GM13976 (cell line): ENCODE measurements at regions of chr3 and their contacts with region 1.

Region 1: GRCh38 chr3:171654809-171655208 is 155.5 kb downstream of the PLD1 start:
- DNase-seq: no peak
- CTCF ChIP-seq: no peak

Region 2: GRCh38 chr3:171768281-171768900 is 113.6 kb after region 1 on chr3:
- in situ Hi-C with region 1: loop called (anchors 10 kb)
- DNase-seq: no peak
- CTCF ChIP-seq: no peak

Region 3: GRCh38 chr3:172332256-172333041 is 677.6 kb after region 1 on chr3:
- in situ Hi-C with region 1: loop called (anchors 25 kb)
- DNase-seq: peak; percentile 64
- CTCF ChIP-seq: peak; percentile 82